ENCODE measurements at regions of chr2 and their contacts with region 1.

Region 1: DNA sequence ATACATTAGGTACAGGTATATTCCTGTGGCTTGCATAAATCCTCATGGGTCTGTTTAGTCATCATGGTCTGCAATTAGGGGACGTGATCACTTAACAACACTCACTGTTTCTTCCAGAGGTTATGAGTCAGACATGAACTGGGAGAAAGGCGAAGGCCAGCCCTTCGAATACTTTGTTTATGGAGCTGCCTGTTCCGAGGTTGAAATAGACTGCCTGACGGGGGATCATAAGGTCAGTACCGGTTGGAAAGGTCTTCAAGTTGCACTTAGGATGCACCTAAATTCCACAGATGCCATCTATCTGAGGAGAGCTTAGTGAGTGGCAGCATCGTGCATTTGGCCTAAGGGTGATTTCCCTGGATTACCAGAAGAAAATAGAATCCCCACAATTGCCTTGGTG is 76.9 kb downstream of the AOX1 start:
- DNase-seq: peak; percentile 80 to 99
- H3K4me3 ChIP-seq: no peak overlapping the region
- H3K27ac ChIP-seq: peak overlapping the region; percentile 82
- H3K4me1 ChIP-seq: peaks cover 44% of the 10 kb centered on the region
- H3K27me3 ChIP-seq: no peaks in the 10 kb centered on the region
- CTCF ChIP-seq: no peak

Region 2: GRCh38 chr2:199414465-199414864 is 1248.3 kb before region 1 on chr2:
- CTCF ChIA-PET with region 1: no interaction called
- POLR2A ChIA-PET with region 1: no interaction called
- intact Hi-C with region 1: no loop called
- DNase-seq: no peak
- H3K4me3 ChIP-seq: no peak overlapping the region
- H3K27ac ChIP-seq: no peak overlapping the region
- H3K4me1 ChIP-seq: no peaks in the 10 kb centered on the region
- H3K27me3 ChIP-seq: no peaks in the 10 kb centered on the region
- CTCF ChIP-seq: no peak

Region 3: DNA sequence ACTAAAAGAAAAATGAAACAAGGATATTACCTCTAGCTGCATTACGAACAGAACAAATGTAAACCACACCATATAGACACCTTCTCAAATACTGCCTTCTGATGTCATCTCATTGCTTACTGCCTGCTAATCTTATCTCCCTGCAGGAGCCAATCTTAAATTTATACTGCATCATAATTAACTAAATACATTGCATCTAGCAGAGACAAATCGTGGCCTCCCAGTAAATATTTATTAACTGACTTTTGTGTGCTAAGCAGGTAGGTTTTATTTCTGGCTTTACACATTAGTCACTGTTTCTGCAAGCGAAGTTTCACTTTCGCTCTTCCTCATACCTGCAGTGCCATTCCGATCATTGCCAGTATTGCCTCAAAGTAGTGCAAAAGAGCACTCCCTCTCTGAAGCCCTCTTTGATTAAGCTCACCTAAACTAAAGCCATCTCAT is 288.7 kb before region 1 on chr2:
- CTCF ChIA-PET with region 1: no interaction called
- POLR2A ChIA-PET with region 1: no interaction called
- intact Hi-C with region 1: no loop called
- DNase-seq: peak in 1 of 2 experiments; percentile 78
- H3K4me3 ChIP-seq: peak overlapping the region; percentile 21; the same call in 1 of the 2 replicates
- H3K27ac ChIP-seq: peak overlapping the region; percentile 62
- H3K4me1 ChIP-seq: peaks cover 73% of the 10 kb centered on the region
- H3K27me3 ChIP-seq: no peaks in the 10 kb centered on the region
- CTCF ChIP-seq: no peak

Region 4: DNA sequence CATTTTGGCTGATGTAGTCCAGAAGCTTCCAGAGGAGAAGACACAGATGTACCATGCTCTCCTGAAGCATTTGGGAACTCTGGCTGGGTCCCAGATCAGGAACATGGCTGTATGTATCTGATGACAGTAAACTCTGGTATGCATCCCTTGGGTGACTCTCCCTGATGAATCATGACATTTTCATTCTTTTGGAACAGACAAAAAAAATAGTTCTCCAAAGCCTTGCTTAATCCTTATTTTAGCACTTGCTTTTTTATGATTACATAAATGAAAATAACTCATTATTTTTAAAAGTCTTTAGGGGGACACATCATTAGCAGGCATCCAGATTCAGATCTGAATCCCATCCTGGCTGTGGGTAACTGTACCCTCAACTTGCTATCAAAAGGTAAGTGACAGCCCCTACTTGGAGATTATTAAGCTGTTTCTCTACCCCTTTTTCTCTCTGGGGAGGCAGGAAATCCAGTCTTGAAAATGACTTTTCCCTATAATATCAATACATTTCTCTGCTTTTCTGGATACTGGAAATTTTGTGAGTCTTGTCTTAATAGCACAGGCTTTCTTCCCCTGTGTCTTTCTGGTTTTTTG is 53.6 kb before region 1 on chr2:
- CTCF ChIA-PET with region 1: no interaction called
- POLR2A ChIA-PET with region 1: no interaction called
- intact Hi-C with region 1: loop called (anchors 2 kb)
- DNase-seq: peak; percentile 43 to 86
- H3K4me3 ChIP-seq: peak overlapping the region; percentile 27; the same call in 1 of the 2 replicates
- H3K27ac ChIP-seq: peak overlapping the region; percentile 70
- H3K4me1 ChIP-seq: peaks cover 30% of the 10 kb centered on the region
- H3K27me3 ChIP-seq: no peaks in the 10 kb centered on the region
- CTCF ChIP-seq: no peak

Measured in PC-9 (cell line).